Caco-2 (cell line): ENCODE measurements at regions of chr19 and their contacts with region 1.

Region 1: DNA sequence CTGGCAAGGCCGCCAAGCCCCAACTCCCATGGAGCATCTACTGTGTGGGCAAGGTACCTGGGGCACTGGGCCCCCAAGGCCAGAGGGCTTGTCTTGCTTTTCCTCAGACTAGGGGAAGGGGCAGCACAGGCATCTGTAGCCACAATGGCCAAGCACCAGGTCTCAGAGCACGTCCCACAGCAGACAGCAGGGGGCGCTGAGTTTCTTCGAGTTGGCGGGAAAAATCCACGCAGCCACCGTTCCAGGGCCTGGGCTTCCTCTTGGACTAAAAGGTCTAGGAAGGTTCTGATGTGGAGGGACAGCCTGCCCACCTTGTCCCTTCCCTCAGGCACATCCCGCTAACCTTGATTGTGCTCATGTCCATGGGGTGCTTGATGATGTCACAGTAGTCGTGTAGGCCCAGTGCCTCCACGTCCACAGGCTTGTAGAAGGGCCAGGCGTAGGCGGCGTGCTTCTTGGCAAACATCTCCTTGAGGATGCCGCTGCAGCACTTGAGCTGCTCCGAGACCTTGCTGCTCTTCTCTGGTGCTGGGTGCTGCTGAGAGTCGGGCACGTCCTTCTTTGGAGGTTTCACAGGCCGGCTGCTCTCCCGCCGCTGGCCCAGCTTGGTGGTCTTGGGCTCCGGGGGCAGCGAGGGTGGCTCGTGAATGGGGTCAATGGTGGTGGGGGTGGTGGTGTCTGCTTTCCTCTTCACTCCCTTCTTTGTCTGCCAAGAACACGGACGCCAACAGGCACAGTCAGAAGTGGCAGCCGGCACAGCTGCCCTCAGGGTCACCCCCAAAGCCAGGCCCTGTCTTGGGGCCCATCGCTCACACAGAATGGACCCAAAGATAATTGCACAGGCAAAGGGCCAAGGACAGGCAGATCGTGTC is 32.0 kb upstream of the EPHX3 start:
- DNase-seq: peak; percentile 68 to 84
- H3K4me3 ChIP-seq: no peak overlapping the region
- H3K4me3 Mint-ChIP-seq: no peak overlapping the region
- H3K27ac Mint-ChIP-seq: no peak overlapping the region
- H3K4me1 ChIP-seq: no peaks in the 10 kb centered on the region
- H3K4me1 Mint-ChIP-seq: peaks cover 21% of the 10 kb centered on the region
- H3K27me3 ChIP-seq: no peaks in the 10 kb centered on the region
- H3K27me3 Mint-ChIP-seq: no peaks in the 10 kb centered on the region
- CTCF ChIP-seq: peak; percentile 70 to 77

Region 2: DNA sequence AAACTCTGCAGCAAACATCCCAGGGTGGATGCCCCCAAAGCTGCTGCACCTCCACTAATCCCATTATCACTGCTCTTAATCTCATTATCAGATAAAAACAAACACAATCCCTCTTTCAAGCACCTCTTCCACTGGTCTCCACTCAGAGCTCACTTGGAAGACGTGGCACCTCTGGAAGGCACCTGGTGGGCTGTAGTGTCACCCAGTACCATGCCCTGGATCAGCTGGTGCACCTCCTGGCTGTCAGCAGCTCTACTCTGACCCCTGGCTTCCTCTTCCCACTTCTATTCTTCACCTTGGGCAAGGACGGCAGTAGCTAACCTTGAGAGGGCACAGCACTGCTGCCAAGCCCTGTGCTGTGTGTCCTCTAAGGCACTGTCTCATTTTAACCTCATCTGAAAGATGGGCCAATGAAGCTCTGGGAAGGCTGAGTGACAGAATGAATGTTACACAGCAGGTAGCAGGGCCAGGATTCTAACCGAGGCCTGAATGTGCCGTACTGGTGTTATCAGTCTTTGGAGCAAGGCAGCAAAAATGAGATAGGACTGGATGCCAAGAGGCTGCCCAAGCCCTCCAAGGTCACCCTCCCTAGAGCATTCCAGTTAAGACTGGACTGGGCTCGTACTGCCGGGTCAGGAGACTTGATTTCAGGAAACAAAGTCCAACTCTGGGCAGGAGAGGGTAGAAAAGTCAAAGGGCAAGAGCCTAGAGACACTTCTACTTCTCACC is 60.7 kb after region 1 on chr19:
- CTCF ChIA-PET with region 1: no interaction called
- POLR2A ChIA-PET with region 1: no interaction called
- intact Hi-C with region 1: loop called (anchors 5 kb)
- DNase-seq: no peak
- H3K4me3 ChIP-seq: no peak overlapping the region
- H3K4me3 Mint-ChIP-seq: no peak overlapping the region
- H3K27ac Mint-ChIP-seq: no peak overlapping the region
- H3K4me1 ChIP-seq: peaks cover 50% of the 10 kb centered on the region
- H3K4me1 Mint-ChIP-seq: peaks cover 55% of the 10 kb centered on the region
- H3K27me3 ChIP-seq: no peaks in the 10 kb centered on the region
- H3K27me3 Mint-ChIP-seq: no peaks in the 10 kb centered on the region
- CTCF ChIP-seq: no peak